CD4-positive, alpha-beta T cell (primary cell): ENCODE measurements at regions of chr1 and their contacts with region 1.

Region 1: DNA sequence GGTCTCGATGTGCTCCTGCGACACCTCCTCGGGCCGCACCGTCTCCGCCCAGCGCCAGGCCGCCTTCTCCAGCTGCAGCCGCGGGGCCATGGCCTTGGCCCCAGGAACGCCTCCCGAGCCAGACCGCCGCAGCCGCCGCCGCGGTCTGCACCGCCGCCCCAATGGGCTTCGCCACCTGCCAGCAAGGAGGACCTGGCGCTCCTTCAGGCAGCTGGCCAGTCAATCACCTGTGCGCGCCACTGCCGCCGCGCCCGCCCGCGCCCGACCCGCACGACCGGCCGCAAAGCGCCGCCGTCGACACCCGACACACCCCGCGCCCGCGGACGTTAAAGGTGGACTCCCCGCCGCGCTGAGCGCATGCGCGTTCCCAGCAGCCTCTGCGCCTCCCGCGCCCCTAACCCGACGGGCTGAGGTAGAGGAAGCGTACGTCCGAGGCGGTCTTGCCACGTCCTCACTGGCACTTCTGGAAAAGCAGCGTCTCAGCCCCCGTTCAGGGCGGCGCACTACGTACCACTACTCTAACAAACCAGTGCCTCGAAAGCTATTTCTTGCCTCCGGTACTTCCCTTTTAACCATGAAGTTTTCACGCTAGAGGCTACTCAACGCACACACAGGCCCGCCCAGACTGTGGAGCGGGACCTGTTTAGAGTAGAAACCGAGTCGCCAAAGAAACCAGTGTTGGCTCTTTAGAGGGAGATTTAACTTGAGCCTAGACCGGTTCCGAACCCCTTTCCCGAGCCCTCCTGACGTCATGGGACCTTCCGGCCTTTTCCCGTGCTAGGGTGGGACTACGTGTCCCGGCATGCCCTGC is at the start of gene USP48:
- DNase-seq: peak; percentile 93 to 99 (median 96)
- ATAC-seq: peak; percentile 82
- H3K4me3 ChIP-seq: peak within 1 kb of the TSS; percentile 100
- H3K4me3 Mint-ChIP-seq: peak within 1 kb of the TSS; percentile 99
- H3K27ac ChIP-seq: peak within 1 kb of the TSS; percentile 99 to 100
- H3K27ac Mint-ChIP-seq: peak within 1 kb of the TSS; percentile 100
- H3K4me1 ChIP-seq: peaks cover 38% of the 10 kb centered on the region
- H3K4me1 Mint-ChIP-seq: peaks cover 39% of the 10 kb centered on the region
- H3K27me3 ChIP-seq: no peaks in the 10 kb centered on the region
- H3K27me3 Mint-ChIP-seq: no peaks in the 10 kb centered on the region
- CTCF ChIP-seq: no peak
- total RNA-seq, gene USP48: 73.3 to 76.0 TPM

Region 2: DNA sequence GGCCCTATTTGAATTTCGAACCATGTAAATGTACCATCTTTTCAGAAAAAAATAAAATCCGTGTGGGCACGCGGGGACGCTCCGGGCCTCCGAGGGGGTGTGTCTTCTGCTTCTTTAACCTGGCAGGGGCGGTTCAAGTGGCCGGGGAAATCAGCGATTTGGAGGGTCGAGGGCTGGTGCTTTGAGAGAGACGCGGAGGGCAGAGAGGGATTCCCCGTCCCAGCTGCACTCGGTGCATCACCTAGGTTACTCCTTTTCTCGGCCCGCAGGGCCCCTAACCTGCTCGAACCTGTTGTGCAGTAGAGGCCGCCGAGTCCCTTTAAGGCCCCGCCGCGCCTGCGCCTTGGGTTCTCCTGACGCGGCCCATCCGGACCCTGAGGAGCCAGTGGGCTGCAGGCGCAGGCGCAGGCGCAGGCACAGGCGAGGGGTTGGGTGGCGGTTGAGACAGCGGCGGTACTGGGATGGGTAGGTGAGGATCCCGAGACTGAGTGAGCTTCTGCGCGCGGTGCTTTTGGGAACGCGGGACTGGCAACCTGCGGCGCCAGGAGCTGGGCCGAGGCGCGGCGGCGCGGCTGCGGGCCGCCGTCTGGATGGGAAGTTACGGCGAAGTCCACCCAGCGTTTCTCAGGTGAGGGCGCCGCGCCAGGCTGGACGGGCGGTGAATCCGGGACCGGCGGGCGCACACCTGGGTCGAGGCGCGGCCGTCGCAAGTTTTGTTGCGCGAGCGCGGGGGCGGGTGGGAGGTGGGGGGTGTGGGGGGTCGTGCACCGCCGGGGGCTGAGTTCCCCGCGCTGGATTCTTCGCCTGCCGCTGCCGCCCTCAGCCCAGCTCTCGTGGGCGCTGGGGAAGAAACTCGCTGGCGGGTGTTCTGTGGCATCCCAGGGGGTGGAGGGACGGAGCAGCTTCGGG is 343.1 kb before region 1 on chr1 and contains the start of gene NBPF3:
- CTCF ChIA-PET with region 1: no interaction called
- POLR2A ChIA-PET with region 1: no interaction called
- intact Hi-C with region 1: loop called in 1 of 2 experiments (anchors 2 kb)
- DNase-seq: peak; percentile 77 to 92 (median 85)
- ATAC-seq: peak; percentile 99
- H3K4me3 ChIP-seq: peak within 1 kb of the TSS; percentile 66
- H3K4me3 Mint-ChIP-seq: peak within 1 kb of the TSS; percentile 97
- H3K27ac ChIP-seq: peak within 1 kb of the TSS in 1 of 2 donors; percentile 21
- H3K27ac Mint-ChIP-seq: peak within 1 kb of the TSS; percentile 95
- H3K4me1 ChIP-seq: peaks cover 19% of the 10 kb centered on the region
- H3K4me1 Mint-ChIP-seq: peaks cover 21% of the 10 kb centered on the region
- H3K27me3 ChIP-seq: peaks cover 0 to 13% of the 10 kb centered on the region in 2 experiments
- H3K27me3 Mint-ChIP-seq: no peaks in the 10 kb centered on the region
- CTCF ChIP-seq: no peak
- total RNA-seq, gene NBPF3: 8.2 to 8.5 TPM

Region 3: GRCh38 chr1:21638531-21639356 is 144.3 kb before region 1 on chr1:
- CTCF ChIA-PET with region 1: no interaction called
- POLR2A ChIA-PET with region 1: no interaction called
- intact Hi-C with region 1: no loop called
- DNase-seq: no peak
- ATAC-seq: no peak
- H3K4me3 ChIP-seq: no peak overlapping the region
- H3K4me3 Mint-ChIP-seq: no peak overlapping the region
- H3K27ac ChIP-seq: no peak overlapping the region
- H3K27ac Mint-ChIP-seq: no peak overlapping the region
- H3K4me1 ChIP-seq: no peaks in the 10 kb centered on the region
- H3K4me1 Mint-ChIP-seq: no peaks in the 10 kb centered on the region
- H3K27me3 ChIP-seq: peaks cover 0 to 4% of the 10 kb centered on the region in 2 experiments
- H3K27me3 Mint-ChIP-seq: peaks cover 16% of the 10 kb centered on the region
- CTCF ChIP-seq: no peak

Region 4: DNA sequence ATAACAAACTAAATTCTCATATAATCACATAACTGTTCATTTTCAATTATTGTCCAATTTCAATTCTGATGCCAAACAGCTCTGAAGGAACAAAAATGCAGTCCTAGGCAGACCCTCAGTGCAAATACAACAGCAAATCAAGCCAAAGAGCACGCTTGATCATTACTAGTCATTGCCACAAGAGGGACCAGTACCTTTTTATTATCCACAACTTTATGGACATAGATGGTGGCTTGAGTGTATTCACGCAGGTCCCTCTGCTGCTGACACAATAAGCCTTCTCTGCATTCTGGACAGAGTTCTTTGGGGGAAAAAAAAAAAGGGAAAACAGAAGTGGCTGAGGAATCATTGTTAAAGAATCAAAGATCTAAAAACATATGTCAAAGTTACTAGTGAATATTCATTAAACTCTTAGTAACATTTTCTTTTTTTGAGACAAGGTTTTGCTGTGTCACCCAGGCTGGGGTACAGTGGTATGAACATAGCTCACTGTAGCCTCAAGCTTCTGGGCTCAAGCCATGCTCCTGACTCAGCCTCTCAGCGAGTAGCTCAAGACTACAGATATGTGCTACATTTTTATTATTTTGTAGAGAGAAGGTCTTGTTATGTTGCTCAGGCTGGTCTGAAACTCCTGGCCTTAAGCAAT is 79.6 kb before region 1 on chr1:
- CTCF ChIA-PET with region 1: no interaction called
- POLR2A ChIA-PET with region 1: no interaction called
- intact Hi-C with region 1: loop called in 1 of 2 experiments (anchors 5 kb)
- DNase-seq: peak in 3 of 14 experiments; percentile 14 to 28 (median 22)
- ATAC-seq: no peak
- H3K4me3 ChIP-seq: no peak overlapping the region
- H3K4me3 Mint-ChIP-seq: no peak overlapping the region
- H3K27ac ChIP-seq: no peak overlapping the region
- H3K27ac Mint-ChIP-seq: no peak overlapping the region
- H3K4me1 ChIP-seq: no peaks in the 10 kb centered on the region
- H3K4me1 Mint-ChIP-seq: no peaks in the 10 kb centered on the region
- H3K27me3 ChIP-seq: no peaks in the 10 kb centered on the region
- H3K27me3 Mint-ChIP-seq: no peaks in the 10 kb centered on the region
- CTCF ChIP-seq: no peak

Region 5: GRCh38 chr1:21956720-21957552 is 173.9 kb after region 1 on chr1:
- CTCF ChIA-PET with region 1: no interaction called
- POLR2A ChIA-PET with region 1: interaction called, 12 read pairs
- intact Hi-C with region 1: no loop called
- DNase-seq: peak; percentile 44 to 86 (median 54)
- ATAC-seq: peak; percentile 95
- H3K4me3 ChIP-seq: peak overlapping the region; percentile 26
- H3K4me3 Mint-ChIP-seq: peak overlapping the region; percentile 71
- H3K27ac ChIP-seq: peak overlapping the region; percentile 68 to 72
- H3K27ac Mint-ChIP-seq: peak overlapping the region; percentile 92
- H3K4me1 ChIP-seq: peaks cover 38% of the 10 kb centered on the region
- H3K4me1 Mint-ChIP-seq: peaks cover 39% of the 10 kb centered on the region
- H3K27me3 ChIP-seq: no peaks in the 10 kb centered on the region
- H3K27me3 Mint-ChIP-seq: no peaks in the 10 kb centered on the region
- CTCF ChIP-seq: no peak

Region 6: DNA sequence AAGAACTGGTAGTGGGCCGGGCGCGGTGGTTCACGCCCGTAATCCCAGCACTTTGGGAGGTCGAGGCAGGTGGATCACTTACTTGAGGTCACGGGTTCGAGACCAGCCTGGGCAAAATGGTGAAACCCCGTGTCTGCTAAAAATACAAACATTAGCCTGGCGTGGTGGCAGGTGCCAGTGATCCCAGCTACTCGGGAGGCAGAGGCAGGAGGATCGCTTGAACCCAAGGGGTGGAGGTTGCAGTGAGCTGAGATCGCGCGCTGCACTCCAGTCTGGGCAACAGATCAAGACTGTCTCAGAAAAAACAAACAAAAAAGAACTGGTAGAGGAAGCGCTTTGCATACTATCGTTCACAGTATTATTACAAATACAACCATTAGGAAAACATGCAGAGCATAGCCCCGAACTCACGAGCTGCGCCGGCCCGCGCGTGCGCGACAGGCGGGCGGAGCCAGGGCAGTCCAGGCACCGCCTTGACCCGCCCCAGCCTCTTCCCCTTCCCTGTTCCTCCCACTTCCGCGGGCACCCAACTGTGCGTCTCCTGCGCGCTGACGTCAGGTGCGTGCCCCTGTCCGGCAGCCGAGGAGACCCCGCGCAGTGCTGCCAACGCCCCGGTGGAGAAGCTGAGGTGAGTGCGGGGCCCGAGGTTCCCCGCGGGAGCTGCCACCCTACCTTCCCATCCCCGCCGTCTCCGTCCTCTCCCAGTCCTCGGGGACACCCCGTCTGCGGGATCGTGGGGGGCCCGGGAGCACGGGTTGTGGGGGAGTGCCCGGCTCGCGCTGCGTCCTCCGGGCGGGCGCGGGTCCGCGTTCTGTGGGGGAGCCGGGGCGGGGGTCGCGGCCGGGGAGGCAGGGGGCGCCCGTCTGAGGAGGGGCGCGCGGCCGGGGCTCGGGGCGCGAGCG is 269.3 kb after region 1 on chr1 and contains the start of gene CDC42:
- CTCF ChIA-PET with region 1: no interaction called
- POLR2A ChIA-PET with region 1: interaction called, 19 read pairs
- intact Hi-C with region 1: no loop called
- DNase-seq: peak; percentile 96 to 99 (median 97)
- ATAC-seq: peak; percentile 88
- H3K4me3 ChIP-seq: peak within 1 kb of the TSS; percentile 88
- H3K4me3 Mint-ChIP-seq: peak within 1 kb of the TSS; percentile 99
- H3K27ac ChIP-seq: peak within 1 kb of the TSS; percentile 96 to 97
- H3K27ac Mint-ChIP-seq: peak within 1 kb of the TSS; percentile 98
- H3K4me1 ChIP-seq: peaks cover 50% of the 10 kb centered on the region
- H3K4me1 Mint-ChIP-seq: peaks cover 70% of the 10 kb centered on the region
- H3K27me3 ChIP-seq: no peaks in the 10 kb centered on the region
- H3K27me3 Mint-ChIP-seq: no peaks in the 10 kb centered on the region
- CTCF ChIP-seq: no peak
- total RNA-seq, gene CDC42: 375 to 379 TPM

Region 7: DNA sequence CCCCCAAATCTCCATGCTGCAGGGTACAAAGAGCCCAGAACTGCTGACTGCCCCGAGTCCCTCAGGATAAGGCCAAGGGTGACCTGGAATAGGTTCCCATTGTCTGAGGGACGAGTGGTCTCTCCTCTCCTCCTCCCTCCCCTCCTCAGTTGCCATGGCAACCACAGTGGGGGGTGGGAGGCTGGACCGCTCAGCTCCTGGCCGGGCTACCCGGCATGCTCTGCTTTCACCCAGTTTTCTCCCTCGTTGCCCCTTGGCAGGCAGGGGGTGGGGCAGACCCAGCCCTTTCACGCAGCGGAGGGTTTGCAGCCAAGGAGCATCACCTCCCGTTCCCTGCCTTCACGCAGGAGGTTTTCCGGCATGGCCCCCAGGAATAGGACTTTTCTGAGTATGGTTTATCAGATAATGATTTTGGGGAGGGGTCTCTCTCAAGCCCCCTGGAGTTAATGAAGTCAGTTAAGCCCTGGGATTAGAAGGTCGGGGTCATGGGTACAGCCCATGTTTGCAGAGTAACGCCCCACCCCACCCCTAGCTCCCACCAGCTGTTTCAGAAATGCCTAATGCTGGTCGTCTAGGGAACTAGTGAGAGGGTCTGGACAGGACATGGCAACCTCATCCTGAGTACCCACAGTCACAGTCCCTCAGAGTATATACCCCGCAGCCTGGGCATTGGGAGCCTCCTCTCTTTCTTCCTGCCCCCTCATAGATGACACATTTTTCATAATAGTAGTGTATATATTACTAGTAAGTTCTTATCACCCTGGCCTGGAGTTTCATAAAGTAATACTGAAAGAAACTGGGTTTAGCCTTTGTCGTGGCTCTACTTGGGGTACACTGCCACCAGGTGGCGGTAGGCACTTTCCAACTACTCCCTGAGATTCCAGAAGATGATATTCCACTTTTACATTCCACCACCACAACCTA is 890.7 kb after region 1 on chr1:
- CTCF ChIA-PET with region 1: no interaction called
- POLR2A ChIA-PET with region 1: no interaction called
- intact Hi-C with region 1: no loop called
- DNase-seq: peak in 1 of 14 experiments; percentile 8
- ATAC-seq: no peak
- H3K4me3 ChIP-seq: no peak overlapping the region
- H3K4me3 Mint-ChIP-seq: no peak overlapping the region
- H3K27ac ChIP-seq: no peak overlapping the region
- H3K27ac Mint-ChIP-seq: no peak overlapping the region
- H3K4me1 ChIP-seq: no peaks in the 10 kb centered on the region
- H3K4me1 Mint-ChIP-seq: no peaks in the 10 kb centered on the region
- H3K27me3 ChIP-seq: peaks cover 19 to 21% of the 10 kb centered on the region in 2 experiments
- H3K27me3 Mint-ChIP-seq: peaks cover 62% of the 10 kb centered on the region
- CTCF ChIP-seq: no peak